ENCODE measurements at regions of chr15 and their contacts with region 1.

Region 1: DNA sequence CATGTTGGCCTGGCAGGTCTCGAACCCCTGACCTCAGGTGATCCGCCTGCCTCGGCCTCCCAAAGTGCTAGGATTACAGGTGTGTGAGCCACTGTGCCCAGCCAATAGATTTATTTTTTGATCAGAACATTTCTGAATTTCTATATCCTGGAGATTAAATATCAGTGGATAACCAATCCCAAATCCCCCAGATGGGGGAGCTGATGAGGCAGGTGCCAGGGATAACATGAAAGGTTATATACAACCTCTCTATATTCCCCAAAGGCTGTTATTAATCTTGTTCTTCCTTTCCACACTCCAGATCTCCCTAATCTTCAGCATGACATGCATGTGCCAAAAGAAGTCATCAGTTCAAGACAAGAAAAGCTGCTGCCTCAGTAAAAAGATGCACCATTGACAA is 112.3 kb downstream of the WDR76 start:
- DNase-seq: no peak
- H3K4me3 ChIP-seq: no peak overlapping the region
- H3K27ac ChIP-seq: no peak overlapping the region
- H3K4me1 ChIP-seq: peaks cover 5% of the 10 kb centered on the region
- H3K27me3 ChIP-seq: no peaks in the 10 kb centered on the region
- CTCF ChIP-seq: peak; percentile 52 to 71

Region 2: DNA sequence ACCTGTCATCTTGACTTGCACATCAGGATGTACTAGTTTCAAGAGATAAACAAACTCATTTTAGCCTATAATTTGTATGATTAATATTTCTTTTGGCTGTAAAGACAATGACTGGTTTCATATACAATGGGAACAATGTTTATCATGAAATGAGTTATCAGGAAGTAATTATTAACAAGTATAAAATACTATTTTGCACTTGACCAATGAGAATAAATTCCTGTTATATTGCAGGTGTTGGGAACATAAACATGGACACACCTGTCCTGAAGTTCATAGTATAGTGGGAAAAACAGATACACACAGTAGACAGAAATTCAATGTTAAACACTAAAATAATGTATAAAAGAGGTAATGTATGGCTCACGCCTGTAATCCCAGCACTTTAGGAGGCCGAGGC is 890.1 kb before region 1 on chr15:
- CTCF ChIA-PET with region 1: no interaction called
- dilution Hi-C with region 1: no loop called
- in situ Hi-C with region 1: no loop called
- intact Hi-C with region 1: no loop called
- DNase-seq: no peak
- H3K4me3 ChIP-seq: no peak overlapping the region
- H3K27ac ChIP-seq: no peak overlapping the region
- H3K4me1 ChIP-seq: no peaks in the 10 kb centered on the region
- H3K27me3 ChIP-seq: no peaks in the 10 kb centered on the region
- CTCF ChIP-seq: no peak

Region 3: DNA sequence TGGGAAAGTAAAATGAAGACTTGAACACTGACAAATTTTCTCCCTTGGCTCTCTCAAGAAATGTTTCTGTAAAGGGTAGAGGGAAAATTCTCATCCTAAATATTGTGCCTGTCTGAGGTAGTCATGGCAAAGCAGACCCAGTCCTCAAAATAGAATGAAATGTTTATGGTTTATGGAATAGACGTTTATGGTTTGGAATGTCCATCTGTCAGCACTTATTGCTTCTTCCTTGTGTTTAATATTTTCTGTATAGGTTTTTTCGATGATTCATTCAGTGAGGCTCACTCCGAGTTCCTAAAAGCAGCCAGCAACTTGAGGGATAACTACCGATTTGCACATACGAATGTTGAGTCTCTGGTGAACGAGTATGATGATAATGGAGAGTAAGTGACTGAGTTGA is 176.2 kb before region 1 on chr15:
- CTCF ChIA-PET with region 1: no interaction called
- dilution Hi-C with region 1: no loop called
- in situ Hi-C with region 1: no loop called
- intact Hi-C with region 1: no loop called
- DNase-seq: no peak
- H3K4me3 ChIP-seq: no peak overlapping the region
- H3K27ac ChIP-seq: no peak overlapping the region
- H3K4me1 ChIP-seq: no peaks in the 10 kb centered on the region
- H3K27me3 ChIP-seq: no peaks in the 10 kb centered on the region
- CTCF ChIP-seq: no peak

Region 4: GRCh38 chr15:44058126-44058525 is 119.1 kb after region 1 on chr15:
- CTCF ChIA-PET with region 1: no interaction called
- dilution Hi-C with region 1: no loop called
- in situ Hi-C with region 1: loop called in 1 of 2 experiments (anchors 10 kb)
- intact Hi-C with region 1: no loop called
- DNase-seq: no peak
- H3K4me3 ChIP-seq: no peak overlapping the region
- H3K27ac ChIP-seq: no peak overlapping the region
- H3K4me1 ChIP-seq: no peaks in the 10 kb centered on the region
- H3K27me3 ChIP-seq: no peaks in the 10 kb centered on the region
- CTCF ChIP-seq: no peak

Region 5: GRCh38 chr15:44066316-44066740 is 127.3 kb after region 1 on chr15:
- CTCF ChIA-PET with region 1: no interaction called
- dilution Hi-C with region 1: no loop called
- in situ Hi-C with region 1: no loop called
- intact Hi-C with region 1: loop called (anchors 1 kb)
- DNase-seq: peak; percentile 65
- H3K4me3 ChIP-seq: no peak overlapping the region
- H3K27ac ChIP-seq: peak overlapping the region; percentile 31
- H3K4me1 ChIP-seq: peaks cover 9% of the 10 kb centered on the region
- H3K27me3 ChIP-seq: no peaks in the 10 kb centered on the region
- CTCF ChIP-seq: peak; percentile 72 to 80

Region 6: GRCh38 chr15:44130778-44131177 is 191.7 kb after region 1 on chr15:
- CTCF ChIA-PET with region 1: no interaction called
- dilution Hi-C with region 1: no loop called
- in situ Hi-C with region 1: no loop called
- intact Hi-C with region 1: loop called (anchors 1 kb)
- DNase-seq: no peak
- H3K4me3 ChIP-seq: no peak overlapping the region
- H3K27ac ChIP-seq: no peak overlapping the region
- H3K4me1 ChIP-seq: no peaks in the 10 kb centered on the region
- H3K27me3 ChIP-seq: no peaks in the 10 kb centered on the region
- CTCF ChIP-seq: peak in 1 of 2 donors; percentile 22

Region 7: DNA sequence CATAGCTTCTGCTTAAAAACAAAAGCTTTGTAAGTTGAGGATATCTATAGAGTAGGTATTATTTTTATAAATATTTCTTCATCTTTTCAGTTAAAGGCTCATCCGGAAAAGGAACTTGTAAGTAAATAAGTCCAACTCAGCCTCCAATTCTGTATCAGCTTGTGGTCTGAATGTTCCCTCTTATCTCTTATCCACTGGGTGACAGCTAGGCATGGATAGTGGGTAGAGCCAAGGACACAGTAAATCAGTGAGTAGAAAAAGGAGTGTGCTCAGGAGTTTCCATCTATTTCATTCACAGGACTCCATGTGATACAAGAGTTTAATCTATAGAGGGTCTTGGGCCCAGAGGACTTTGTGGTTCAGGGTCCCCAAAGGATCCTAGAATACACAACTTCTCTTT is 205.1 kb after region 1 on chr15:
- CTCF ChIA-PET with region 1: no interaction called
- dilution Hi-C with region 1: no loop called
- in situ Hi-C with region 1: no loop called
- intact Hi-C with region 1: no loop called
- DNase-seq: no peak
- H3K4me3 ChIP-seq: no peak overlapping the region
- H3K27ac ChIP-seq: no peak overlapping the region
- H3K4me1 ChIP-seq: no peaks in the 10 kb centered on the region
- H3K27me3 ChIP-seq: no peaks in the 10 kb centered on the region
- CTCF ChIP-seq: no peak

Measured in mammary epithelial cell (primary cell).